HEK293 (cell line): ENCODE measurements at regions of chr12 and their contacts with region 1.

Region 1: GRCh38 chr12:96986883-96987523 is 79.9 kb downstream of the NEDD1 start:
- H3K4me3 ChIP-seq: no peak overlapping the region
- H3K27ac ChIP-seq: no peak overlapping the region
- H3K4me1 ChIP-seq: no peaks in the 10 kb centered on the region
- CTCF ChIP-seq: no peak

Region 2: DNA sequence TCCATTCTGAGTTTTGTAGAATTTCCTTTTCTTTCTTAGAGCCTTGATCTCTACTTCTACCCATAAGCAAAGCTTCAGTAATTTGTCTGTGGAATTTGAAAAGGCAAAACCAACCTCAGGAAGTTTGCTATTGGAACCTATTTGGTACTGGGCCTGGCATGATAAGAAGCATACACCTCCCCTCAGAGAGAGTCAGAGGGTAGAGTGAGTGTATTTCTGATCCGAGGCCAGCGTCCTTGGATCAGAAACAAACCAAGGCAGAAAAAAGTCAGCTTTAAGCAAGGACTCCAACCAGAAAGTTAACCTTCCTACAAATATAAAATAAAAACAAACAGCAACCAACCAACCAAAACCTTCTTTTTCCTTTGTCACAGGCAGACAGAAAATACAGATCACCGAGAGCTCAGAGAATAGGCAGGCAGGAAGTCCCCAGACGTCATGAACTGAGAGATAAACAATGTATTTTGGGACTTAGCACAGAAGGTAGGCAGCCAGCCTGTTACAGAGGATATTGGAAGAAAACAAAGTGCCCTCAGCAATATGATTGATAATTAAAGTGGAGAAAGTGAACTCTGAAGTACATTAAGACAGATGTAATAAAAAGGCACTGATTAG is 61.5 kb after region 1 on chr12:
- CTCF ChIA-PET with region 1: no interaction called
- POLR2A ChIA-PET with region 1: no interaction called
- H3K4me3 ChIP-seq: no peak overlapping the region
- H3K27ac ChIP-seq: no peak overlapping the region
- H3K4me1 ChIP-seq: no peaks in the 10 kb centered on the region
- CTCF ChIP-seq: no peak

Region 3: GRCh38 chr12:97061171-97061570 is 74.2 kb after region 1 on chr12:
- CTCF ChIA-PET with region 1: no interaction called
- POLR2A ChIA-PET with region 1: no interaction called
- H3K4me3 ChIP-seq: no peak overlapping the region
- H3K27ac ChIP-seq: no peak overlapping the region
- H3K4me1 ChIP-seq: no peaks in the 10 kb centered on the region
- CTCF ChIP-seq: no peak

Region 4: DNA sequence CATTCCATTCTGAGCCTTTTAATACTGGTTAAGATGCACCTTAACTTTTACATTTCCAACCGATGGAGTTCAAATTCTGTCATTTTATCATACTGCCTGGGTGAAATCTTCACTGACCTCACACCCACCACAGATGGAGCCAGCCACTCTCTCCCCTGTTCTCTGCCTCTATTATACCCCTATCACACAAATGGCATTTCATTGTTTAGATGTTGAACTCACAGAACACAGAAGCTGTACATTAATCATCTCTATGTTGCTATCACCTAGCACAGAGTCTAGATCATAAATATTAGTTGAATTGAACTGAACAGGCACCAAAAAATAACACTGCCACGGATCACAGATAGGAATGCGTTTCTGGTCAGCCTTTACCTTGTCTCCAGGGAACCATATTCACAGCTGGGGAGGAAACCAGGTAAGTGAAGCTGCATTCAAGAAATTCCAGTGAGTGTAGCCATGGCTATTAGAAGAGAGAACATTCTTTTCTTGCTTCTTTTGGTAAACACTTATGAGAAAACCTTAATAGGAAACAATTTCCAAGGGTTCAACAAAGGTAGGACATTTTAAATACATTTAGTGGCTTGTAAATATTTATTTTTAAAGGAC is 280.7 kb after region 1 on chr12:
- CTCF ChIA-PET with region 1: no interaction called
- POLR2A ChIA-PET with region 1: no interaction called
- H3K4me3 ChIP-seq: no peak overlapping the region
- H3K27ac ChIP-seq: no peak overlapping the region
- H3K4me1 ChIP-seq: no peaks in the 10 kb centered on the region
- CTCF ChIP-seq: no peak

Region 5: DNA sequence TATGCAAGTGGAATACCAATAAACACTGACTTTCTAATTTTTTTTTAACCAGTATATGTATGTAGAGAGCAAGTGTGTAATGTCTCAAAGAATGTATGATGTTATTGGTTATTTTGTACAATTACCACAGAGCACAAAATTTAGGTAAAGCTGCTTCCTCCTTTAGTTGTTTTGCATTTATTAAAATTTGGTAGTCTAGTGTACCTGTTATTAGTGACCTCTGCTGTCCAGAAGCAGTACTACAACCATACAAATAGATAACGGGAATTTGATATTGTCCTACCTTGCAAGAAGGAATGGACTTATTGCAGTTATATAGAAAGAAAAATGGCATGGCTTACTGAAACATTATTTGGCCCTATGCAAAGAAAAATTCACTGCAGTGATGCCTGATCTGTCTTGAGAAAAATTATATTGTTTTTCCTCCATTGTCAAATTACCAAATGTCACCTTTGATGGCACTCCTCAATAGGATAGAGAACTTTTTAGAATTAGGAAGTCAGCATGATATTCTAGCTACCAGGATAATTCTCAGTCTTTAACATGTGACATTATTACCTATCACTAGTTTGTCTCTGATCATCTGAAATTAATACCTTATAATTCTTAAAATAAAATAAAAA is 321.7 kb after region 1 on chr12:
- CTCF ChIA-PET with region 1: interaction called, 13 read pairs
- POLR2A ChIA-PET with region 1: no interaction called
- H3K4me3 ChIP-seq: no peak overlapping the region
- H3K27ac ChIP-seq: no peak overlapping the region
- H3K4me1 ChIP-seq: no peaks in the 10 kb centered on the region
- CTCF ChIP-seq: no peak